ENCODE measurements at regions of chr6 and their contacts with region 1.

Region 1: GRCh38 chr6:56902641-56903464 is 52.1 kb upstream of the BEND6 start:
- DNase-seq: peak in 8 of 10 donors; percentile 29 to 75 (median 56)
- H3K4me3 ChIP-seq: peak overlapping the region in 22 of 59 donors; percentile 1 to 43 (median 19)
- H3K27ac ChIP-seq: peak overlapping the region in 5 of 59 donors; percentile 5 to 35 (median 23)
- H3K27me3 ChIP-seq: no peaks in the 10 kb centered on the region
- CTCF ChIP-seq: peak; percentile 60 to 88 (median 76)

Region 2: DNA sequence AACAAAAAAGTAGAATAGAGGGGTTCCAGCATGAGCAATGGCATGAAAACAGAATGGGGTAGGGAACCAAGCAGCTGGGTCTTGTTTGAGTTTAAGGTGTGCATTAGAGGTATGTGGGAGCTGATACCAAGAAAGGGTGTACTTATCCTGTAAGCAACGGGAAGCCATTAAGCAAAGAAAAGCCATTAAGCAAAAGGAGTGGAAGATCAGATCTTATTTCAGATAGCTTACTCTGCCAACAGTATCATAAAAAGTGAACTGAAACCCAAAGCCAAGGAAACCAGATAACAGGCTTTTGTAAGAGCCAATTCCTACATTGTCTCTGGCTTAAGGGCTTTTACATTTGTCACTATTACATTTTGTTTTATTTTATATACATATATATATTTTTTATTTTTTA is 30.8 kb after region 1 on chr6:
- intact Hi-C with region 1: no loop called
- DNase-seq: no peak
- H3K4me3 ChIP-seq: no peak overlapping the region
- H3K27ac ChIP-seq: no peak overlapping the region
- H3K27me3 ChIP-seq: no peaks in the 10 kb centered on the region
- CTCF ChIP-seq: no peak

Region 3: GRCh38 chr6:57021086-57021720 is 118.3 kb after region 1 on chr6:
- intact Hi-C with region 1: loop called (anchors 2 to 5 kb)
- DNase-seq: no peak
- H3K4me3 ChIP-seq: no peak overlapping the region
- H3K27ac ChIP-seq: no peak overlapping the region
- H3K27me3 ChIP-seq: no peaks in the 10 kb centered on the region
- CTCF ChIP-seq: peak; percentile 39 to 81 (median 66)

Region 4: DNA sequence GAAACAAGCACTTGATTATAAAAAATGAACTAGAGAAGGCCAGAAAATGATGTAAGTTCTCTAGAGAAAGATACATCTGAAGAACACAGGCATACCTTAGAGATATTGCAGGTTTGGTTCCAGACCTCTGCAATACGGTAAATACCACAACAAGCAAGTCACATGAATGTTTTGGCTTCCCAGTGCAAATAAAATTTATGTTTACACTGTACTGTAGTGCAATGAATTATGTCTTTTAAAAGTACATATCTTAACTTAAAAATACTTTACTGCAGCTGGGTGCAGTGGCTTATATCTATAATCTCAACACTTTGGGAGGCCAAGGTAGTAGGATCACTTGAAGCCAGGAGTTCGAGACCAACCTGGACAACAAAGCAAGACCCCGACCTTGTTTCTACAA is 132.7 kb after region 1 on chr6:
- intact Hi-C with region 1: no loop called
- DNase-seq: no peak
- H3K4me3 ChIP-seq: no peak overlapping the region
- H3K27ac ChIP-seq: no peak overlapping the region
- H3K27me3 ChIP-seq: peaks cover 0 to 19% (median 0%) of the 10 kb centered on the region in 45 donors
- CTCF ChIP-seq: no peak

Measured in dorsolateral prefrontal cortex (tissue), 120 donors.